ENCODE measurements at regions of chr20 and their contacts with region 1.

Region 1: DNA sequence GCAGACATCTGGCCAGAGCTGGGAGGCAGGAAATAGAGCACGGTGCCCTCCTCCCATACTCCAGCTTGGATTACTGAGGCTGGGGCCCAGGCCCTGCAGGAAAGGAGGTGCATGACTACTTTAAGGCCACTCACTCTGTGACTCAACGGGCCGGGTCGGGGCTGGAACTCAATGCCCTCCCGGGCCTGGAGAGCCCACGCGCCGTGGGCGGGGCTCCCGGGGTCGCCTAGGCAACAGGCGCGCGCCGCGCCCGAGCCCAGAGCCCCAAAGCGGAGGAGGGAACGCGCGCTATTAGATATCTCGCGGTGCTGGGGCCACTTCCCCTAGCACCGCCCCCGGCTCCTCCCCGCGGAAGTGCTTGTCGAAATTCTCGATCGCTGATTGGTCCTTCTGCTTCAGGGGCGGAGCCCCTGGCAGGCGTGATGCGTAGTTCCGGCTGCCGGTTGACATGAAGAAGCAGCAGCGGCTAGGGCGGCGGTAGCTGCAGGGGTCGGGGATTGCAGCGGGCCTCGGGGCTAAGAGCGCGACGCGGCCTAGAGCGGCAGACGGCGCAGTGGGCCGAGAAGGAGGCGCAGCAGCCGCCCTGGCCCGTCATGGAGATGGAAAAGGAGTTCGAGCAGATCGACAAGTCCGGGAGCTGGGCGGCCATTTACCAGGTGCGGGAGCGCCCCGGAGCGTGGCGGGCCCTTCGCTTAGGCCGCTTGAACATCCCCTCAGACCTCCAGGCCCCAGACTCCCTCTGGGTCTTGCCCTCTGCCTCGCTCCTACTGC is at the start of gene PTPN1:
- DNase-seq: peak; percentile 97
- H3K4me3 ChIP-seq: peak within 1 kb of the TSS; percentile 95
- CTCF ChIP-seq: no peak

Region 2: GRCh38 chr20:50467718-50468356 is 42.3 kb before region 1 on chr20:
- in situ Hi-C with region 1: no loop called
- DNase-seq: no peak
- H3K4me3 ChIP-seq: no peak overlapping the region
- CTCF ChIP-seq: no peak

Region 3: GRCh38 chr20:50561379-50562078 is 51.4 kb after region 1 on chr20:
- in situ Hi-C with region 1: loop called (anchors 5 kb)
- DNase-seq: peak; percentile 94
- H3K4me3 ChIP-seq: no peak overlapping the region
- CTCF ChIP-seq: no peak